Colonic mucosa (tissue), 4 donors: ENCODE measurements at regions of chr17 and their contacts with region 1.

Region 1: GRCh38 chr17:71472809-71473789 is 647.7 kb upstream of the SOX9 start:
- DNase-seq: peak; percentile 30
- H3K4me3 ChIP-seq: no peak overlapping the region
- H3K27ac ChIP-seq: no peak overlapping the region
- H3K4me1 ChIP-seq: no peaks in the 10 kb centered on the region
- H3K27me3 ChIP-seq: no peaks in the 10 kb centered on the region
- CTCF ChIP-seq: peak; percentile 57

Region 2: GRCh38 chr17:71412803-71413202 is 60.3 kb before region 1 on chr17:
- intact Hi-C with region 1: no loop called
- DNase-seq: no peak
- H3K4me3 ChIP-seq: no peak overlapping the region
- H3K27ac ChIP-seq: no peak overlapping the region
- H3K4me1 ChIP-seq: no peaks in the 10 kb centered on the region
- H3K27me3 ChIP-seq: no peaks in the 10 kb centered on the region
- CTCF ChIP-seq: no peak

Region 3: GRCh38 chr17:71494062-71494855 is 21.2 kb after region 1 on chr17:
- intact Hi-C with region 1: no loop called
- DNase-seq: no peak
- H3K4me3 ChIP-seq: no peak overlapping the region
- H3K27ac ChIP-seq: no peak overlapping the region
- H3K4me1 ChIP-seq: no peaks in the 10 kb centered on the region
- H3K27me3 ChIP-seq: no peaks in the 10 kb centered on the region
- CTCF ChIP-seq: no peak

Region 4: GRCh38 chr17:72110231-72110944 is 637.3 kb after region 1 on chr17:
- intact Hi-C with region 1: loop called (anchors 5 kb)
- DNase-seq: peak; percentile 23
- H3K4me3 ChIP-seq: peak overlapping the region; percentile 1
- H3K27ac ChIP-seq: no peak overlapping the region
- H3K4me1 ChIP-seq: no peaks in the 10 kb centered on the region
- H3K27me3 ChIP-seq: peaks cover 3% of the 10 kb centered on the region
- CTCF ChIP-seq: no peak